GM23248 (cell line): ENCODE measurements at regions of chr4 and their contacts with region 1.

Region 1: DNA sequence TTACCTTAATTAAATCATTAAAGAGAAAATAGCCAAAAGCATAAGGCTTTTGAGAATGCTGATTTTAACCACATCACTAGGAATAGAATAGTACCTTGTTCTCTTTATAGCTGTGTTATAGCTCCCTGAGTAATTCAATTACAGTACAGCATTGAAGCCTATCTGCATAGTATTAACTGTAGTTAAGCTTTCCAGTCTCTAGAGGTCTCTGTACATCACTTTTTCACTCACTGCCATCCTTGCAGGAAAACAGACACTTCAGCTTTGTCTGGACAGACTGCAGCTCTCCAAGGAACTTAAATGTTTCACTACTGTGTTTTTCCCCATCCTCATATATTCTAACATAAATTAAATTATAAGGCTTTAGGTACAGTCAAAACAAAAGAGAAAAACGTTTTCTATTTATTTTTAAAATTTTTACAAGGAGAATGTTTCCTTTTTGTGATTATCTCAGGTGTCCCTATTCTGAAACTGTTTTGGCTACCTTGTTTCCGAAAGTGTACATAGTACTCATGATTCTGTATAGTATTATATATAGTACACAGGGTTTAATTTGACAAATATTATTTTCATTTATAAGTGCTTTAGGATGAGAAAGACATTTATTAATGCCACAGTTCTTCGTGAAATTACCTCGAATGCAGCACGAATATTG is 407.9 kb downstream of the PCDH18 start:
- DNase-seq: peak; percentile 87
- H3K4me3 ChIP-seq: peak overlapping the region; percentile 80
- H3K27ac ChIP-seq: peak overlapping the region; percentile 49
- H3K4me1 ChIP-seq: peaks cover 7% of the 10 kb centered on the region; the same call in 1 of the 2 replicates
- H3K27me3 ChIP-seq: no peaks in the 10 kb centered on the region

Region 2: GRCh38 chr4:137524725-137525369 is 400.4 kb after region 1 on chr4:
- in situ Hi-C with region 1: loop called (anchors 10 kb)
- DNase-seq: peak; percentile 79
- H3K4me3 ChIP-seq: peak overlapping the region; percentile 98
- H3K27ac ChIP-seq: peak overlapping the region; percentile 88
- H3K4me1 ChIP-seq: peaks cover 58% of the 10 kb centered on the region
- H3K27me3 ChIP-seq: no peaks in the 10 kb centered on the region

Region 3: GRCh38 chr4:138090150-138090917 is 965.9 kb after region 1 on chr4:
- in situ Hi-C with region 1: loop called (anchors 25 kb)
- DNase-seq: peak; percentile 74
- H3K4me3 ChIP-seq: peak overlapping the region; percentile 67
- H3K27ac ChIP-seq: no peak overlapping the region
- H3K4me1 ChIP-seq: 0 out of 2 replicates have a peak, but pooled peaks cover 4% of the 10 kb centered on the region
- H3K27me3 ChIP-seq: no peaks in the 10 kb centered on the region

Region 4: DNA sequence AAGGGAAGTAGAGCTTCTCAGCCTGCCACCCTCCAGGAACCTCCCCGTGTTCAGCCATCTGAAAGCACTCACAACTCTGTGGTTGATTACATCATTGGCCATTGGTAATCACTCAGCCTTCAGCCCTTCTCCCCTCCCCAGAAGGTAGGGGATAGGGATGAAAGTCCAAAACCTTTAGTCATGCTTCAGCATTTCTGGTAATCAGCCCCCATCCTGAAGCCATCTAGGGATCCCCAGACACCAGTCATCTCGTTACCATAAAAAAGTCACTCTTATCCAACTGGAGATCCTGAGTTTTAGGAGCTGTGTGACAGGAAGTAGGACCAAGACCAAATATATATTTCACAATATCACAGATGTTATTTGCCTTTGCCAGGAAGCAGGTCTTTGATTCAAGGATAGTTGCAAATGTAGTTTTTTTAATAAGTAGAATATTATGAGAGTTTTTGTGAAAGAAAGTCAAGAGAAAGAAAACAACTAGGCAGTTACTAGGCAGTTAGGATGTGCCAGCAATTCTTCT is 1526.6 kb after region 1 on chr4:
- in situ Hi-C with region 1: loop called (anchors 25 kb)
- DNase-seq: peak; percentile 81
- H3K4me3 ChIP-seq: 0 out of 2 replicates have a peak overlapping the region, but pooled peaks have one; percentile 11
- H3K27ac ChIP-seq: peak overlapping the region; percentile 33
- H3K4me1 ChIP-seq: peaks cover 16% of the 10 kb centered on the region
- H3K27me3 ChIP-seq: no peaks in the 10 kb centered on the region